ENCODE measurements at regions of chrX and their contacts with region 1.

Region 1: GRCh38 chrX:78333521-78333920 is 6.1 kb upstream of the CYSLTR1 start:
- DNase-seq: no peak
- H3K4me3 ChIP-seq: no peak overlapping the region
- H3K27ac ChIP-seq: no peak overlapping the region
- H3K4me1 ChIP-seq: no peaks in the 10 kb centered on the region
- H3K27me3 ChIP-seq: no peaks in the 10 kb centered on the region
- CTCF ChIP-seq: no peak
- EP300 ChIP-seq: no peak
- POLR2A ChIP-seq: no peak

Region 2: GRCh38 chrX:77200663-77201062 is 1132.9 kb before region 1 on chrX:
- in situ Hi-C with region 1: no loop called
- intact Hi-C with region 1: loop called (anchors 10 kb)
- DNase-seq: no peak
- H3K4me3 ChIP-seq: no peak overlapping the region
- H3K27ac ChIP-seq: no peak overlapping the region
- H3K4me1 ChIP-seq: no peaks in the 10 kb centered on the region
- H3K27me3 ChIP-seq: no peaks in the 10 kb centered on the region
- CTCF ChIP-seq: no peak
- EP300 ChIP-seq: no peak
- POLR2A ChIP-seq: no peak